ENCODE measurements at regions of chr2 and their contacts with region 1.

Region 1: DNA sequence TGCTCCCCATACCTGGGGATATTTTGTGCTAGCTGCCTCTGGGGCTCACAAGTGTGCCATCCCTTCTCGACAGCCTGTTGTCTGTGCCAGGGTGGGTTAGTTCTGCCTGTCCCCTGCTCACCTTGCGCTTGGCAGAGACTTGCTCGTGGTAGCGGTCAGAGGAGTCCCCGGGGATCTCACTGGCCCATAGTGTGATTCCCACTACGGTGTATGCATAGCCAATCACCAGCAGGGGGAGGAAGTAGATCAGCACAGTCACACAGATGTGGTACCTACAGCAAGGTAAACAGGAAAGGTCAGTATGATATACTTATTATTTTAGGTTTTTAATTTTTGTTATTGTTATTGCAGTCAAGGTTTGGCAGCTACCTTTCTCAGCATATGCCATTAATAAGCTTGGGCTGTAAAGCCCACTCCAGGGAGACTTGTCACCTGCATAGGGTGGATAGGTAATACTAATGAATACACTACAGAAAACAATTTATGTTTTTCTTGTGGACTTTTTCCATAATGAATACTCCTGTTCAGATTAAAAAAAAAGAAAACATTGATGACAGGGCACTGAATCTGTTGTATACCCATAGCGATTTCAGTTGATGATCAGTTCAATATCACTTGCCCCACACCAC is 95.2 kb downstream of the POLE4 start:
- DNase-seq: no peak
- H3K4me3 Mint-ChIP-seq: no peak overlapping the region
- H3K27ac Mint-ChIP-seq: no peak overlapping the region
- H3K4me1 Mint-ChIP-seq: peaks cover 5% of the 10 kb centered on the region
- H3K27me3 Mint-ChIP-seq: peaks cover 8% of the 10 kb centered on the region

Region 2: GRCh38 chr2:74919827-74920226 is 133.8 kb before region 1 on chr2:
- intact Hi-C with region 1: loop called (anchors 10 kb)
- DNase-seq: peak; percentile 51
- H3K4me3 Mint-ChIP-seq: no peak overlapping the region
- H3K27ac Mint-ChIP-seq: no peak overlapping the region
- H3K4me1 Mint-ChIP-seq: peaks cover 9% of the 10 kb centered on the region
- H3K27me3 Mint-ChIP-seq: peaks cover 22% of the 10 kb centered on the region

Region 3: GRCh38 chr2:75211266-75211770 is 157.7 kb after region 1 on chr2:
- intact Hi-C with region 1: no loop called
- DNase-seq: no peak
- H3K4me3 Mint-ChIP-seq: no peak overlapping the region
- H3K27ac Mint-ChIP-seq: no peak overlapping the region
- H3K4me1 Mint-ChIP-seq: peaks cover 4% of the 10 kb centered on the region
- H3K27me3 Mint-ChIP-seq: peaks cover 2% of the 10 kb centered on the region

Measured in activated T-helper 2 cell treated with anti-CD3 and anti-CD28 coated beads, Interferon-gamma antibody, Interleukin-2, Interleukin-4, amounts not matched to agents 10 μg/mL and 5 μg/mL and 100 μg/mL, durations not matched to agents 14 hours and 24 hours and 36 hours (primary cell).